ENCODE measurements at regions of chr17 and their contacts with region 1.

Region 1: GRCh38 chr17:16380640-16381495 is at the start of gene UBB:
- DNase-seq: peak in 1 of 2 donors; percentile 95
- H3K4me3 ChIP-seq: peak within 1 kb of the TSS; percentile 67 to 75
- H3K27ac ChIP-seq: peak within 1 kb of the TSS; percentile 100
- H3K4me1 ChIP-seq: peaks cover 44% of the 10 kb centered on the region
- H3K27me3 ChIP-seq: no peaks in the 10 kb centered on the region
- CTCF ChIP-seq: no peak
- POLR2A ChIP-seq: peak in 1 of 2 donors; percentile 97
- total RNA-seq, gene UBB: 625 TPM

Region 2: DNA sequence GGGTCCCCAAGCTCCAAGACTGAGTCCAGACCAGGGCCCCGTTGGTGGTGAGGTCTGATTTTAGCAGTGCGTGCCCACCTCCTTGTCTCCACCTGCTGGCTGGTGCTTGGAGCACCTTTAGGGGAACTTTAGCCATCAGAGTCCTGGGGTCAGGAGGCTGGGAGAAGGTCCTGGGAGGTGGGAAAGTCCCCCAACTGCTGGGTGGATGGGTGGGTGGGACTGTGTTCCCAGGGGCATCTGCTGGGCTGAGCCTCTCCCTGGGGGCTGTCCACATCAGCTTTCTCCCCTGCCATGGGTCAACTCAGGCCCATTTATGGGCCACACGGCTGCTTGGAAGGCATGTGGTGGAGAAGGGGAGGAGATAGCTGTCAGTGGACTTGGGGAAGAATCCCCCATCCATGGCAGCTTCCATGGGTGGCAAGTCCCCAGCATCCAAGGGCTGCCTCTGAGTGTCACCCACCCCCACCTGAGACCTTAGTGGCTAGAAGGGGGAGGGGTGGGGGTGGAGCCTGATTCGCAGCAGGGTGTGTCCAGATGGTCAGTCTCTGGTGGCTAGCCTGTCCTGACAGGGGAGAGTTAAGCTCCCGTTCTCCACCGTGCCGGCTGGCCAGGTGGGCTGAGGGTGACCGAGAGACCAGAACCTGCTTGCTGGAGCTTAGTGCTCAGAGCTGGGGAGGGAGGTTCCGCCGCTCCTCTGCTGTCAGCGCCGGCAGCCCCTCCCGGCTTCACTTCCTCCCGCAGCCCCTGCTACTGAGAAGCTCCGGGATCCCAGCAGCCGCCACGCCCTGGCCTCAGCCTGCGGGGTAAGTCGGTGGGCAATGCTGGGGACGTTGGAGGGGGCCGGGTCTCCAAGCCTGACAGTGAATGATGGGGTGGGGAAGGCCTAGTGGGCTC is 34.4 kb after region 1 on chr17 and contains the start of gene TRPV2:
- intact Hi-C with region 1: loop called (anchors 2 kb)
- DNase-seq: no peak
- H3K4me3 ChIP-seq: peak within 1 kb of the TSS; percentile 47 to 65
- H3K27ac ChIP-seq: peak within 1 kb of the TSS; percentile 91
- H3K4me1 ChIP-seq: peaks cover 45% of the 10 kb centered on the region
- H3K27me3 ChIP-seq: no peaks in the 10 kb centered on the region
- CTCF ChIP-seq: peak in 1 of 3 experiments; percentile 26
- POLR2A ChIP-seq: no peak
- total RNA-seq, gene TRPV2: 22.3 TPM

Region 3: DNA sequence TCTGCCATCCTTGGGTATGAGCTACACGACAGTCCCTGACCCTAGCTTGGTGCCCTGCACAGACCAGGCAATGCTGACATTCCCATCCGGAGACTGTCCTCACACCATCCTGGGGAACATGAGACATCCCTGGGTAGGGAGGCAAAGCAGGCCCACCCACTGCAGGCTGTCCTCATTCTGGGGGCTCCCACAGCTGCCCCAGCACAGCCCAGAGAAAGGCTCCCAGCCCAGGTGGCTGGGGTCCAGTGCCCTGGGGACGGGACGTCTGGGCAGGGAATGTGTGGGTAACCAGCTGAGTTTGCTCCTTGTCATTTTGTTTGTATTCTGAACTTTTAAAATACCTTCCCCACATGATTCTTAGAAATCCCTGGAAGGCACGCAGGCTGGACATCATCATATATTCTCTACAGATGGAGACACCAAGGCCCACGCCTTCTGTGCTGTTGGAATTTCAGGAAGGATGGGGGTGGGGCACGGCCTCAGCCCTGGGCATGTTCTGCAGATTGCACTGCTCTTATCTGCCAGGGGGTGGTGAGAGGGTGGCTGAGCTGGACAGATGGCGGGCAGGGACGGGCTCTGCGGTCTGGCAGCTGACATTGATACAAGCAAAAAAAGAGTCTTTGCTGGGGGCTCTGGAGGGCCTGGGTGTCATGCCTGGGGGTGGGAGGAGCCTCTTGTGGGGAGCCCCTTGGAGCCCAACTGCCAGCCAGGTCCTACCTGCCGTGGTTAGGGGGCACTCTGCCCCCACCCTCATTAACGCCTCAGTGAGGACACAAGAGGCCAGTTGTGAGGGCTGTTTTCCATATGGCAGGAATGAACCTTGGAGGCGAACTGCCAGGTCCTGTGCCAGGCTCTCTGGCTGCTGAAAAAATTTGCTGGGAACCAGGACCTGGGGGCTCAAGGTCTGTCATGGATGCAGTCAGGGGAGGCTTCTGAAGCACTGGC is 82.8 kb after region 1 on chr17:
- intact Hi-C with region 1: no loop called
- DNase-seq: no peak
- H3K4me3 ChIP-seq: no peak overlapping the region
- H3K27ac ChIP-seq: no peak overlapping the region
- H3K4me1 ChIP-seq: peaks cover 20% of the 10 kb centered on the region
- H3K27me3 ChIP-seq: no peaks in the 10 kb centered on the region
- CTCF ChIP-seq: no peak
- POLR2A ChIP-seq: no peak

Region 4: DNA sequence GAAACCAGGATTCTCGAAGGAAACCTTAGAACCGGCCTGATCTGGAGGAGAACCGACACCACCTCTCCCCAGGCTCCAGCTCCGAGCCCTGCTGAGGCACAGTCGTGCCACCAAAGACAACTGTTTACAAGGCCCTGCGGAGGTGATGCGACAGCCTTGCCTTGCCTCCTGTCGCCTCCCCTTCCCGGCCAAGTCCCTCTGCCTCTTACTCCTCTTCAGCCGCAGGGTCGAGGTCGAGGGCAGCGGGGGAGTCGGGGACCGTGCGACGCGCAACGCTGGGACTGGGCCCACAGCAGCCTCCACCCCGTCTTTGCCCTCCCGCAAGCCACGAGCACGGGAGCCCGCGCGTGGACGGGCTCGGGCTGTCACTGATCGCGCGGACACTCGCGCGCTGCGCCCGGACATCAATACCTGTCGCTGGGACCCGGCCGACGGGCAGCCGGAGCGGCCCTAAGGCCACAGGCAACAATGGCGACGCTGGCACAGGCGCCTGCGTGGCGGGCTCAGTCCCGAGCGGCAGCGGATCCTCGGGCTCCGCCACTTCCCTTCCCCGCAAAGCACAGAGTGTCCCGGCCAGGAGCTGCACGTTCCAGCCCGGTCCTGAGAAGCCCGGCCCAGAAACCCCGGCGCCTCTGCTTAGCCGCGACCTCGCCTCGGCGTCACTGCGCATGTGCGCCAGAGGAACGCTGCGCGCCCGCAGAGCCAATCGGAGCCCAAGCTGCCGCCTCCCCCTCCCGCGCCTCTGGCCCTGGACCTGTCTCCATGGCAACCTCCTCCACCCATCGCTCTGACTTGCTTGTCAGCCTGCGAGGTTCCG is 187.9 kb after region 1 on chr17 and contains the start of gene ZNF287:
- intact Hi-C with region 1: no loop called
- DNase-seq: peak in 1 of 2 donors; percentile 91
- H3K4me3 ChIP-seq: peak within 1 kb of the TSS; percentile 71
- H3K27ac ChIP-seq: peak within 1 kb of the TSS; percentile 73
- H3K4me1 ChIP-seq: peaks cover 9% of the 10 kb centered on the region
- H3K27me3 ChIP-seq: no peaks in the 10 kb centered on the region
- CTCF ChIP-seq: no peak
- POLR2A ChIP-seq: peak in 1 of 2 donors; percentile 20
- total RNA-seq, gene ZNF287: 5.9 TPM